ENCODE measurements at regions of chr1 and their contacts with region 1.

Region 1: DNA sequence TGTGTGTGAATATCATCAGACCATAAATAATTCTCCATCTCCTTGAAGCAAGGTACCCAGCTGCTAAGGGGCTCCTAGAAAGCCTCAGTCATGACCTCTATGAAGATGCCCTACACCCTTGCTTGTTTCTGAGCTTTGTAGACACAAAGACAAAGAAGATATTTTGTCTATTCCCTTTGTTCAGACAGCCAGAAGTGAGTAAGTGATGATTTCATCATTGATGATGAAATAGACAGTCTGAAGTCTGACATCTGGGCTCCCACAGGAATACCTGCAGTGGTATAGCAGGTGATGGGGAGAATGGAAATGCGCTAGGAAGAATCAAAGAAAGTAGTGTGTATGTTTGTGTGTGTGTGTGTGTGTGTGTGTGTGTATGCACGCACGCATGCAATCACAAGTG is 82.2 kb upstream of the DPT start:
- DNase-seq: no peak
- ATAC-seq: no peak
- H3K4me3 ChIP-seq: no peak overlapping the region
- H3K27ac ChIP-seq: no peak overlapping the region
- H3K4me1 ChIP-seq: no peaks in the 10 kb centered on the region
- H3K27me3 ChIP-seq: no peaks in the 10 kb centered on the region
- CTCF ChIP-seq: no peak
- POLR2A ChIP-seq: no peak

Region 2: DNA sequence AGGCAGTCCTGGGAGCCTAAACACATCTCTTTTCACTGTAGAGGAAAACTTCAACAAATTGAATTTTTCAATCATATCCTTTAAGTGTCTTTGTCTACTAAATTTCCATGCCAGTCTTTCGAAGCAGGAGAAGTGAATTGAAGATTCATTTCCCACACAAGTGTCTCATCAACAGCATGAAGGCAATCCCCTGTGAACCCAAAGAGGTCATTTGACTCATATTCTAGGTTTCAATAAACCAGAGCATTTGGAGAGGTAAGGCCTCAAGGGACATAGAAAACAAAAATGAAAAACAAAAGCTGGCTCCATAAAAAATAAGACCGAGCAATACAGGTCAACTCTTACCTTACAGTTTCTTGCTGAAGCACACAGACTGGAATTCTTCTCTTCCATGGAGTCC is 201.2 kb after region 1 on chr1:
- intact Hi-C with region 1: loop called in 1 of 10 experiments (anchors 10 kb)
- DNase-seq: no peak
- ATAC-seq: no peak
- H3K4me3 ChIP-seq: no peak overlapping the region
- H3K27ac ChIP-seq: no peak overlapping the region
- H3K4me1 ChIP-seq: no peaks in the 10 kb centered on the region
- H3K27me3 ChIP-seq: no peaks in the 10 kb centered on the region
- CTCF ChIP-seq: no peak
- POLR2A ChIP-seq: no peak